A549 (cell line): ENCODE measurements at regions of chr19 and their contacts with region 1.

Region 1: GRCh38 chr19:45125926-45126493 is 33.0 kb downstream of the PPP1R37 start:
- DNase-seq: peak; percentile 65 to 76
- ATAC-seq: peak; percentile 84 to 93
- H3K4me3 ChIP-seq: no peak overlapping the region
- H3K27ac ChIP-seq: no peak overlapping the region
- H3K4me1 ChIP-seq: peaks cover 10% of the 10 kb centered on the region
- CTCF ChIP-seq: peak; percentile 75
- EP300 ChIP-seq: no peak
- POLR2A ChIP-seq: no peak
- RAD21 ChIP-seq: peak; percentile 67 to 68

Region 2: DNA sequence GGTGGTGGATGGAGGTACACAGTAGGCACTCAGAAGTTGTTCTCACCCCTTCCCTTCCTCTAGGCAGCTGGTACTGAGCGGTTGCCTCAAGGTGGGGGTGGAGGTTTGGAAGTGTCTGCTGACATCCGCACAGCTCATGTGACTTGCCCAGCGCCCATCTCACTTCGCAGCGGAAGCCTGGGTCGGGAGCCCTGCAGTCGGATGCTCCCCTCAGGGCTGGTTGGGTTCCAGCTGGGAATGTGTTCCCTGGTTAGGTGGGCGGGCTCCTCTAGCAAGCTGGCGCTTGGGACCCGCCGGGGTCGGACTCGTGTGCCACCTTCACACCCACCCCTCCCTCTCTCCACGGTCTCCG is 22.9 kb before region 1 on chr19:
- CTCF ChIA-PET with region 1: interaction called, 46 read pairs
- POLR2A ChIA-PET with region 1: interaction called, 4 read pairs
- DNase-seq: no peak
- ATAC-seq: no peak
- H3K4me3 ChIP-seq: no peak overlapping the region
- H3K27ac ChIP-seq: no peak overlapping the region
- H3K4me1 ChIP-seq: peaks cover 29% of the 10 kb centered on the region
- CTCF ChIP-seq: no peak
- EP300 ChIP-seq: no peak
- POLR2A ChIP-seq: no peak
- RAD21 ChIP-seq: no peak

Region 3: DNA sequence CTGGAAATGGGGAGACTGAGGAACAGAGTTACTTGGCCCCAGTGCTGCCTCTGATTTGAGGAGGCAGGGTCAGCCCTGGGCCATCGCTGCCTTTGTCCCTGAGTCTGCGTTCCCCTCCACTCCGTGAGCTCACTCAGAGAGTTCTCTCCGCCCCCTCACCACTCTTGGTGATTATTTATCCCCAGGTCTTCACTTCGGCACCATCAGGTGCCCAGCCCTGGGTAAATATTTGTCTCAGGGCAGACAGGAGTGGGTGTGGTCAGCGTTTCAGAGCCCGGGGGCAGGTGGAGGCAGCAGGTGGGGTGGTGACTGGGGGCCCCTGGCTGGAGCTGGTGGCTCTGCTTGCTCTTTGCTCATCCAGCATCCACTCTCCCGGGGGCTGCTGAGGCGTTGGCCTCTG is 12.4 kb before region 1 on chr19:
- CTCF ChIA-PET with region 1: interaction called, 25 read pairs
- POLR2A ChIA-PET with region 1: no interaction called
- DNase-seq: no peak
- ATAC-seq: no peak
- H3K4me3 ChIP-seq: no peak overlapping the region
- H3K27ac ChIP-seq: peak overlapping the region in 1 of 2 experiments; percentile 32; a peak in 2 of 6 replicates
- H3K4me1 ChIP-seq: peaks cover 15% of the 10 kb centered on the region
- CTCF ChIP-seq: no peak
- EP300 ChIP-seq: no peak
- POLR2A ChIP-seq: no peak
- RAD21 ChIP-seq: no peak

Region 4: DNA sequence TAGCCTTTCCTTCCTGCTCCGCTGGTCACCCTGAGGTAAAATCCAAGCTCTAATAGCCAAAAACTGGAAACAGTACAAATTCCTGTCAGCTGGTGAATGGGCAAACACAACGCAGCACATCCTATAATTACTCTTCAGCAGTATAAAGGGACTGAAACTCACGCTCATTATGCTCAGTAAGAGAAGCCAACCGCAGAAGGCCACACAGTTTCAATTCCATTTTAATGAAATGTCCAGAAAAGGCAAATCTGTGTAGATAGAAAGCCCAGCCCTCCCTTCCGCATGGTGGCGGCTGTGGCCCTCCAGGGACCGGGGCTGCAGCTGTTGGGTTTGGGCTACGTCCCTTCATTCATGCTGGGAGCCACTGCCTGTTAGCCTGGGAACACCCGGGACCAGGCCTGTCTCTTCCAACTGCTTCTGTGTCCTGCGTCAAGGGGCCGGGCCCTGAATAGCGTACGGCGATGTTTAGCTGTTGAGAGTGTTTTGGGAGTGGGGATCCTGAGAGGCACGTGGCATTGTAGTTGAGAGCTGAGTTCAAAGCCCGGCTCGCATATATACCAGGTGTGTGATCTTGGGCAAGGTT is 11.3 kb after region 1 on chr19:
- CTCF ChIA-PET with region 1: interaction called, 51 read pairs
- POLR2A ChIA-PET with region 1: no interaction called
- DNase-seq: no peak
- ATAC-seq: no peak
- H3K4me3 ChIP-seq: no peak overlapping the region
- H3K27ac ChIP-seq: peak overlapping the region in 1 of 2 experiments; percentile 74; a peak in 1 of 6 replicates
- H3K4me1 ChIP-seq: no peaks in the 10 kb centered on the region
- CTCF ChIP-seq: no peak
- EP300 ChIP-seq: no peak
- POLR2A ChIP-seq: no peak
- RAD21 ChIP-seq: no peak

Region 5: DNA sequence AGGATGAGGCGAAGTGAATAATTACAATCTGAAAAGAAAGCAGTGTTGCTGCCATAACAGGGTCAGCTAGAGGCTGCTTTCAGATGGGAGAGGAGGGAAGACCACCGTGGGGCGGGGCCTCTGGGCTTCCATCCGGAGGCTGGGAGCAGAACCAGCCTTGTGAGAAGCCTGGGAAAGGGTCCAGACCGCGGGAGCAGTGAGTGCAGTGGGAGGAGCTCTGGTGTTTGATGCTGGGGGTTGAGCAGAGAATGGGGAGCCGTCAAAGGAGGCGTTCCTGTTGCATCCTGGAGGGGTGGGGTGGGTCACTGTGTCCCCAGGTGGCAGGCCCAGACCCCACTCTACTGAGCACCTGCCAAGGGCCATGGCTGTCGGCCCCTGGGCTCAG is 16.7 kb after region 1 on chr19:
- CTCF ChIA-PET with region 1: interaction called, 51 read pairs
- POLR2A ChIA-PET with region 1: no interaction called
- DNase-seq: no peak
- ATAC-seq: no peak
- H3K4me3 ChIP-seq: no peak overlapping the region
- H3K27ac ChIP-seq: no peak overlapping the region
- H3K4me1 ChIP-seq: no peaks in the 10 kb centered on the region
- CTCF ChIP-seq: no peak
- EP300 ChIP-seq: no peak
- POLR2A ChIP-seq: no peak
- RAD21 ChIP-seq: no peak

Region 6: GRCh38 chr19:45164577-45165335 is 38.7 kb after region 1 on chr19:
- CTCF ChIA-PET with region 1: interaction called, 12 read pairs
- POLR2A ChIA-PET with region 1: no interaction called
- DNase-seq: peak in 1 of 2 experiments; percentile 79
- ATAC-seq: peak; percentile 20 to 68
- H3K4me3 ChIP-seq: no peak overlapping the region
- H3K27ac ChIP-seq: peak overlapping the region in 1 of 2 experiments; percentile 13; a peak in 2 of 6 replicates
- H3K4me1 ChIP-seq: 0 out of 3 replicates have a peak, but pooled peaks cover 4% of the 10 kb centered on the region
- CTCF ChIP-seq: no peak
- EP300 ChIP-seq: no peak
- POLR2A ChIP-seq: no peak
- RAD21 ChIP-seq: no peak